Posterior vena cava (tissue), 2 donors: ENCODE measurements at regions of chr2 and their contacts with region 1.

Region 1: GRCh38 chr2:199160677-199161465 is 296.9 kb downstream of the SATB2 start:
- DNase-seq: no peak

Region 2: GRCh38 chr2:199118617-199119241 is 42.1 kb before region 1 on chr2:
- intact Hi-C with region 1: no loop called
- DNase-seq: no peak

Region 3: DNA sequence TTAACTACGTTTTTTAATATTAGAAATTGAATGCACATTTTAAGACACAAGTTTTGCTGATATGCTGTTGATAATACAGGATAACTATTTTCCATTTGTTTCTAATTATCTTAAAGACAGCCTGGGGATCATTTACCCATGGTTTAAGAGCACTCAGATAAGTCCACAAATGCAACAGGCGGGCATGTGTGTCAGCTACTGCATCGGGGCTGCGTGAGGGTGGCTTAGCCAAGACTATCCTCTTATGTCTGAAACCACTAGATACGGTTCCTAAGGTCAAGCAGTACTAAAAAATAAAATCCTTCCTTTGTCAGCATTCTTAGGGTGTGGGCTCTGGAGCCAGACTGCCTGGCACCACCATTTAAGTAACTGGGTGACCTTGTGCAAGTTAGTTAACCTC is 42.1 kb after region 1 on chr2:
- intact Hi-C with region 1: loop called in 1 of 2 experiments (anchors 2 kb)
- DNase-seq: no peak

Region 4: GRCh38 chr2:199624946-199625654 is 464.2 kb after region 1 on chr2:
- intact Hi-C with region 1: no loop called
- DNase-seq: no peak